A673 (cell line): ENCODE measurements at regions of chr11 and their contacts with region 1.

Region 1: GRCh38 chr11:9180784-9181183 is 84.4 kb downstream of the DENND5A start:
- DNase-seq: no peak
- H3K4me3 ChIP-seq: no peak overlapping the region
- H3K27ac ChIP-seq: no peak overlapping the region
- H3K4me1 ChIP-seq: no peaks in the 10 kb centered on the region
- H3K27me3 ChIP-seq: no peaks in the 10 kb centered on the region
- CTCF ChIP-seq: no peak

Region 2: DNA sequence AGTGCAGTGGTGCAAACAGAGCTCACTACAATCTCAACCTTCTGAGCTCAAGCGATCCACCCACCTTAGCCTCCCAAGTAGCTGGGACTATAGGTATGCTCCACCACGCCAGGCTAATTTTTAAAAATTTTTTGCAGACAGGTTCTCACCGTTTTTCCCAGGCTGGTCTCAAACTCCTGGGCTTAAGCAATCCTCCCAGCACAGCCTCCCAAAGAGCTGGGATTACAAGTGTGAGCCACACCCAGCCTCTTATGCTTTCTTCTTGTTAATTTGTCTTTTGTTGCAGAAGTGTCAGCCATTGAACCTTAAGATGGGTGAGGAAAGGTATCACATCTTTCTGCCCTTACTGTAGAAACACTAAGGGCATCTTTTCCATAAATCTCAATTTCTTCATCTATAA is 49.5 kb after region 1 on chr11:
- CTCF ChIA-PET with region 1: no interaction called
- POLR2A ChIA-PET with region 1: interaction called, 11 read pairs
- intact Hi-C with region 1: no loop called
- DNase-seq: no peak
- H3K4me3 ChIP-seq: no peak overlapping the region
- H3K27ac ChIP-seq: no peak overlapping the region
- H3K4me1 ChIP-seq: peaks cover 7% of the 10 kb centered on the region
- H3K27me3 ChIP-seq: no peaks in the 10 kb centered on the region
- CTCF ChIP-seq: no peak

Region 3: GRCh38 chr11:9347100-9347499 is 166.3 kb after region 1 on chr11:
- CTCF ChIA-PET with region 1: no interaction called
- POLR2A ChIA-PET with region 1: no interaction called
- intact Hi-C with region 1: no loop called
- DNase-seq: no peak
- H3K4me3 ChIP-seq: no peak overlapping the region
- H3K27ac ChIP-seq: no peak overlapping the region
- H3K4me1 ChIP-seq: no peaks in the 10 kb centered on the region
- H3K27me3 ChIP-seq: no peaks in the 10 kb centered on the region
- CTCF ChIP-seq: no peak